HCT116 (cell line): ENCODE measurements at regions of chr6 and their contacts with region 1.

Region 1: GRCh38 chr6:116969211-116969863 is 92.3 kb downstream of the RFX6 start:
- DNase-seq: peak; percentile 57
- ATAC-seq: peak; percentile 84
- H3K4me3 ChIP-seq: no peak overlapping the region
- H3K27ac ChIP-seq: no peak overlapping the region
- H3K4me1 ChIP-seq: no peaks in the 10 kb centered on the region
- H3K27me3 ChIP-seq: no peaks in the 10 kb centered on the region
- CTCF ChIP-seq: peak; percentile 63 to 80 (median 73); a peak in 4 of 6 replicates
- POLR2A ChIP-seq: no peak
- RAD21 ChIP-seq: peak; percentile 69

Region 2: GRCh38 chr6:116779573-116780164 is 189.7 kb before region 1 on chr6:
- CTCF ChIA-PET with region 1: interaction called, 5 read pairs
- POLR2A ChIA-PET with region 1: no interaction called
- RAD21 ChIA-PET with region 1: no interaction called
- intact Hi-C with region 1: loop called (anchors 2 kb)
- DNase-seq: peak; percentile 28
- ATAC-seq: peak; percentile 76
- H3K4me3 ChIP-seq: no peak overlapping the region
- H3K27ac ChIP-seq: no peak overlapping the region
- H3K4me1 ChIP-seq: 0 out of 4 replicates have a peak, but pooled peaks cover 0 to 3% of the 10 kb centered on the region in 2 experiments
- H3K27me3 ChIP-seq: no peaks in the 10 kb centered on the region
- CTCF ChIP-seq: peak; percentile 24 to 64 (median 46); a peak in 4 of 6 replicates
- POLR2A ChIP-seq: no peak
- RAD21 ChIP-seq: peak; percentile 57

Region 3: GRCh38 chr6:116881236-116881635 is 88.1 kb before region 1 on chr6:
- CTCF ChIA-PET with region 1: interaction called, 27 read pairs
- POLR2A ChIA-PET with region 1: no interaction called
- RAD21 ChIA-PET with region 1: interaction called in 1 of 2 experiments, 7 read pairs
- intact Hi-C with region 1: loop called (anchors 1 kb)
- DNase-seq: peak; percentile 7
- ATAC-seq: peak; percentile 60; the same call in 1 of the 2 replicates
- H3K4me3 ChIP-seq: no peak overlapping the region
- H3K27ac ChIP-seq: no peak overlapping the region
- H3K4me1 ChIP-seq: no peaks in the 10 kb centered on the region
- H3K27me3 ChIP-seq: no peaks in the 10 kb centered on the region
- CTCF ChIP-seq: peak; percentile 19 to 58 (median 58); a peak in 4 of 6 replicates
- POLR2A ChIP-seq: no peak
- RAD21 ChIP-seq: peak; percentile 56

Region 4: DNA sequence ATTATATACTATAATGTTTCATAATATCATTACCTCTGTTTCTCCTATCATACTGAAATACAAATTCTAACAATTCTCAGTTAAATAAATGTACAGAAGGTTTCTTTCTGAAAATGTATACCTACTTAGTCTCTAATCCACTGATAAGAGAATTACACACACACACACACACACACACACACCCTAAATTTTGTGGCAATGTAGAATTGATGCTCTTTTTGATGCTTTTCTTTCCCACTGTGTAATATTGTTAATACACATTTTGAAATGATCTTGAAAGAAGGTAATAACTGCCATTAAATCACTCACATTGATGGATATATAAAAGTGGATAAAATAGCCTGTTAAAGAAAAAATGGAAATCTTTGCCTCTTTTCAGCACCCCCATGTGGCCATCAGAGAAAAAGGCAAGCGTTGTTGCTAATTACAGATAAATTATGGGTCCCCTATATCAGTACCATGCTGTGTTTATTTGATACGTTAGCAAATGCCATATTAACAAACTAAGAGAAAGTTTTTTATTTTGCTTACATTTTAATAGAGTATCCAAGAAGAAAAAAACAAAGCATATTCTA is 219.4 kb after region 1 on chr6:
- CTCF ChIA-PET with region 1: no interaction called
- POLR2A ChIA-PET with region 1: no interaction called
- RAD21 ChIA-PET with region 1: no interaction called
- intact Hi-C with region 1: loop called (anchors 1 kb)
- DNase-seq: peak; percentile 6
- ATAC-seq: peak; percentile 70
- H3K4me3 ChIP-seq: no peak overlapping the region
- H3K27ac ChIP-seq: no peak overlapping the region
- H3K4me1 ChIP-seq: no peaks in the 10 kb centered on the region
- H3K27me3 ChIP-seq: no peaks in the 10 kb centered on the region
- CTCF ChIP-seq: peak; percentile 48 to 76 (median 69); a peak in 5 of 6 replicates
- POLR2A ChIP-seq: no peak
- RAD21 ChIP-seq: peak; percentile 50

Region 5: DNA sequence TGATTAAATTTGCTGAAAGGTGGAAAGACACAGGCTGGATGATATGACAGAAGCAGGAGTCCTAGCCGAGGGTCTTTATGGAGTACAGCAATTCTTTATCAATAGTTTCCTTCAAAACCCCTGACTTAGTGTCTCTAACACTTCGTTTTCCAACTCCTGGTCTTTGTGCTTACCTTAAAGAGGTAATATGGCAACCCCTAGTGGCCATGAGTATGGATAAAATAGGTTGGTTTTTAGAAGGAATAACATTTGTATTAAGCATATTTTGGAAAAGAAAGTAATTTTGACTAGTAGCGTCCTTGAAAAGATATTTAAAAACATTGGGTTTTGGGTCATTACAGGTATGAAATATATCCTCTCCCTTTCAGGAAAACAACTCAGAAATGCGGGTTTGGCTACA is 347.9 kb after region 1 on chr6:
- CTCF ChIA-PET with region 1: interaction called, 4 read pairs
- POLR2A ChIA-PET with region 1: no interaction called
- RAD21 ChIA-PET with region 1: no interaction called
- intact Hi-C with region 1: loop called (anchors 1 kb)
- DNase-seq: peak; percentile 13
- ATAC-seq: peak; percentile 78
- H3K4me3 ChIP-seq: no peak overlapping the region
- H3K27ac ChIP-seq: no peak overlapping the region
- H3K4me1 ChIP-seq: no peaks in the 10 kb centered on the region
- H3K27me3 ChIP-seq: no peaks in the 10 kb centered on the region
- CTCF ChIP-seq: peak; percentile 51 to 67 (median 59)
- POLR2A ChIP-seq: no peak
- RAD21 ChIP-seq: peak; percentile 76

Region 6: GRCh38 chr6:117653949-117654348 is 684.6 kb after region 1 on chr6:
- CTCF ChIA-PET with region 1: no interaction called
- POLR2A ChIA-PET with region 1: no interaction called
- RAD21 ChIA-PET with region 1: no interaction called
- intact Hi-C with region 1: no loop called
- DNase-seq: no peak
- ATAC-seq: no peak
- H3K4me3 ChIP-seq: no peak overlapping the region
- H3K27ac ChIP-seq: no peak overlapping the region
- H3K4me1 ChIP-seq: no peaks in the 10 kb centered on the region
- H3K27me3 ChIP-seq: no peaks in the 10 kb centered on the region
- CTCF ChIP-seq: no peak
- POLR2A ChIP-seq: no peak
- RAD21 ChIP-seq: no peak